ENCODE measurements at regions of chr19 and their contacts with region 1.

Region 1: DNA sequence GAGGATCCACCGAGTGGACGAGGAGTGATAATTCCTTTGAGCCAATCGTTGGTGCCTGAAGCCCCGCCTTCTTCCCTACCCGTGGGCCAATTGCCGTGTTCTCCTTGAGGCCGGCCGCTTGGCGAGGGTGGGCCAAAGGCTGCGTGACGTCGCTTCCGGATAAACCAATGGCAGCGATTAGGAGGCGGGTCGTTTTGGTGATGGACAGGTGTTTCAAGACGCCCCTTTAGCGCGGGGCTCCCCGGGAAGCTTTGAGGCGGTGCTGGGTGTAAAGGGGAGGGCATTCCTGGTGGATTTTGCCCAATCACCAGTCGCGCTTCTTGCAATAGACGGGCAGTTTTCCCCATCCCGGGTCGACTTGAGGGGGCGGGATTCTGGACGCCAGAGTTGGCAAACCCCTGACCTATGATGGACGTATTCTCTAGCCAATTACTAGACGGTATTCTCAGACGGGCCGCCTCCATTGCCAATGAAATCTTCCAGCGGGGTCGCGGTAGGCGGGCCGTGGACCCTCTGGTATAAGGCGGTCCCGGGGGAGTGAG is 310 bp upstream of the PRMT1 start:
- DNase-seq: peak; percentile 100
- H3K4me3 ChIP-seq: peak overlapping the region; percentile 63
- H3K27ac ChIP-seq: peak overlapping the region; percentile 90 to 93
- H3K4me1 ChIP-seq: peaks cover 6% of the 10 kb centered on the region
- H3K27me3 ChIP-seq: no peaks in the 10 kb centered on the region
- CTCF ChIP-seq: no peak
- EP300 ChIP-seq: peak; percentile 21
- POLR2A ChIP-seq: no peak

Region 2: DNA sequence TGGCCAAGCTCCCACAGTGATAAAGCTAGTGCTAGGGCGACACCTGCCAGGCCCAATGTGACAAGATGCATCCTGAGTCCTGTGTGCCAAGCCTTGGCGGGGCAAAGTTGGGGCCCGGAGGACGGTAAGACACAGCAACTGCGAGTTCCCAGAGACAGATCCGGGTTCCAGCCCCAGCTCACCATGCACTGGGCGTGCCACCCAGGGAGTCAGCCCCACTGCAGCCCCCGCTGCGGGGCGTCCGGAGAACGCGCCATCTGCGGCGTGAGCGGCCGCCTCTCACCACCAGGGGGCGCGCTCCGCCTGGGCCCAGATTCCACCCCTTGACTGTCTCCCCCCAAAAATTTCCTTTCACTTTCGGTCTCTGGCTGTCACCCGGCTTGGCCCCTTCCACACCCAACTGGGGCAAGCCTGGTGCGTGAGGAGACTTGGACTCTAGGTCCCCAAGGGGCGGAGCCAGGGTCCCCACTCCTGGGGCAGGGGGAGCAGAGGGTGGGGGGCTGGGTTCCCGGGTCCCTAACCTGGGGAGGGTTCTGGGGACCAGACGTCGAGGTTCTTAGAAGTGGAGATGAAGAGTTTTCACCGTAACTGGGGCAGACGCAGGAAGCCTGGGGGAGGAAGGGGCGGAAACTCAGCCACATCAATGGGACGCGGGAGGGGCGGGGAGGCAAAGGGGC is 202.8 kb before region 1 on chr19 and contains the start of gene FLT3LG:
- intact Hi-C with region 1: loop called in 1 of 4 experiments (anchors 10 kb)
- DNase-seq: peak; percentile 77 to 89 (median 83)
- H3K4me3 ChIP-seq: peak within 1 kb of the TSS; percentile 76
- H3K27ac ChIP-seq: peak within 1 kb of the TSS in 1 of 2 donors; percentile 63
- H3K4me1 ChIP-seq: peaks cover 5% of the 10 kb centered on the region
- H3K27me3 ChIP-seq: no peaks in the 10 kb centered on the region
- CTCF ChIP-seq: peak; percentile 97 to 100 (median 97)
- EP300 ChIP-seq: no peak
- POLR2A ChIP-seq: no peak
- total RNA-seq, gene FLT3LG: 5.1 to 15.2 (median 12.2) TPM

Region 3: DNA sequence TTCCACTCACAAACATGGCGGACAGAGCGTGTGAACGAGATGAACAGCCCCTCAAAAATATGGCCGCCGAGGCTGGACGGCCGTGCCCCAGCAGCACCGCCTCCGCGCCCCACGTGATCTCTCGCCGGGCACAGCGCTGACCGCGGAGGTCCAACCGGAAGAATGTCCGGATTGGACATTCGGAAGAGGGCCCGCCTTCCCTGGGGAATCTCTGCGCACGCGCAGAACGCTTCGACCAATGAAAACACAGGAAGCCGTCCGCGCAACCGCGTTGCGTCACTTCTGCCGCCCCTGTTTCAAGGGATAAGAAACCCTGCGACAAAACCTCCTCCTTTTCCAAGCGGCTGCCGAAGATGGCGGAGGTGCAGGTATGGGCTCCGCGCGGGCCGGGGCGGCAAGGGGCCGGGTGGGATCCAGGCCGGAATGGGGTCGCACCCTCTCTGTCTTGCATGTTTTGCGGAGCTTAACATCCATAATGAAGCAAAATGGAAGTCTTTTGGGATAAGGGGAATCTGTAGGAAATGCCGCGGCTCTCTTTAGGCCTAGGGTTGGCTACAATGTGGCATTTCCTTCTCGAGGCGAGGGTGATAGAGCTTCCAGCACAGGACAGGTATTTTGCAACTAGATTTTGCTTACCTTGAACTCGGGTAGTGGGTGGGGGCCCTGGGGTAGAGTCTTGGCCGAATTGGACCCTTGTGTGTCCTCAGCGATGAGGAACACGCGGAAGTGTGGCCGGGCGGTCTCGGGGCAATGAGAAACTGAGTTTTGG is 189.3 kb before region 1 on chr19 and contains the start of gene RPL13A:
- intact Hi-C with region 1: loop called in 1 of 4 experiments (anchors 10 kb)
- DNase-seq: peak; percentile 100
- H3K4me3 ChIP-seq: peak within 1 kb of the TSS; percentile 65
- H3K27ac ChIP-seq: peak within 1 kb of the TSS; percentile 84
- H3K4me1 ChIP-seq: peaks cover 9% of the 10 kb centered on the region
- H3K27me3 ChIP-seq: no peaks in the 10 kb centered on the region
- CTCF ChIP-seq: peak in 2 of 3 donors; percentile 20 to 22
- EP300 ChIP-seq: peak; percentile 46
- POLR2A ChIP-seq: peak; percentile 98
- total RNA-seq, gene RPL13A: 4,998 to 9,736 (median 6,664) TPM

Region 4: GRCh38 chr19:49497047-49497788 is 179.5 kb before region 1 on chr19:
- intact Hi-C with region 1: loop called in 1 of 4 experiments (anchors 5 kb)
- DNase-seq: peak in 1 of 5 donors; percentile 61
- H3K4me3 ChIP-seq: peak overlapping the region; percentile 72
- H3K27ac ChIP-seq: peak overlapping the region; percentile 87 to 89
- H3K4me1 ChIP-seq: peaks cover 8% of the 10 kb centered on the region
- H3K27me3 ChIP-seq: no peaks in the 10 kb centered on the region
- CTCF ChIP-seq: no peak
- EP300 ChIP-seq: no peak
- POLR2A ChIP-seq: no peak

Region 5: GRCh38 chr19:49533551-49534488 is 142.9 kb before region 1 on chr19:
- intact Hi-C with region 1: no loop called
- DNase-seq: peak; percentile 72 to 90 (median 87)
- H3K4me3 ChIP-seq: peak overlapping the region; percentile 61
- H3K27ac ChIP-seq: peak overlapping the region; percentile 4 to 12
- H3K4me1 ChIP-seq: peaks cover 9% of the 10 kb centered on the region
- H3K27me3 ChIP-seq: no peaks in the 10 kb centered on the region
- CTCF ChIP-seq: no peak
- EP300 ChIP-seq: no peak
- POLR2A ChIP-seq: no peak

Region 6: GRCh38 chr19:49570138-49570856 is 106.5 kb before region 1 on chr19:
- intact Hi-C with region 1: loop called in 1 of 4 experiments (anchors 5 kb)
- DNase-seq: peak; percentile 51 to 72 (median 62)
- H3K4me3 ChIP-seq: no peak overlapping the region
- H3K27ac ChIP-seq: peak overlapping the region in 1 of 2 donors; percentile 19
- H3K4me1 ChIP-seq: peaks cover 9% of the 10 kb centered on the region
- H3K27me3 ChIP-seq: no peaks in the 10 kb centered on the region
- CTCF ChIP-seq: peak; percentile 90 to 94 (median 93)
- EP300 ChIP-seq: no peak
- POLR2A ChIP-seq: no peak

Region 7: GRCh38 chr19:49590071-49590970 is 86.4 kb before region 1 on chr19:
- intact Hi-C with region 1: loop called in 1 of 4 experiments (anchors 10 kb)
- DNase-seq: peak; percentile 90 to 93 (median 91)
- H3K4me3 ChIP-seq: peak overlapping the region; percentile 74
- H3K27ac ChIP-seq: peak overlapping the region; percentile 20 to 75
- H3K4me1 ChIP-seq: peaks cover 3% of the 10 kb centered on the region
- H3K27me3 ChIP-seq: no peaks in the 10 kb centered on the region
- CTCF ChIP-seq: peak in 1 of 3 donors; percentile 9
- EP300 ChIP-seq: no peak
- POLR2A ChIP-seq: no peak

Region 8: GRCh38 chr19:49640113-49640898 is 36.5 kb before region 1 on chr19 and contains the start of gene RRAS:
- intact Hi-C with region 1: loop called in 1 of 4 experiments (anchors 5 kb)
- DNase-seq: peak; percentile 98 to 100 (median 99)
- H3K4me3 ChIP-seq: peak within 1 kb of the TSS; percentile 80
- H3K27ac ChIP-seq: peak within 1 kb of the TSS; percentile 98 to 100
- H3K4me1 ChIP-seq: peaks cover 12% of the 10 kb centered on the region
- H3K27me3 ChIP-seq: no peaks in the 10 kb centered on the region
- CTCF ChIP-seq: no peak
- EP300 ChIP-seq: peak; percentile 81
- POLR2A ChIP-seq: peak; percentile 97
- total RNA-seq, gene RRAS: 28.7 to 62.8 (median 37.6) TPM

Region 9: GRCh38 chr19:49817964-49818648 is 141.3 kb after region 1 on chr19 and contains the start of gene MED25:
- intact Hi-C with region 1: no loop called
- DNase-seq: peak; percentile 88 to 94 (median 91)
- H3K4me3 ChIP-seq: peak within 1 kb of the TSS; percentile 80
- H3K27ac ChIP-seq: peak within 1 kb of the TSS; percentile 96 to 97
- H3K4me1 ChIP-seq: peaks cover 11% of the 10 kb centered on the region
- H3K27me3 ChIP-seq: no peaks in the 10 kb centered on the region
- CTCF ChIP-seq: peak in 2 of 3 donors; percentile 61 to 79
- EP300 ChIP-seq: no peak
- POLR2A ChIP-seq: peak; percentile 86
- total RNA-seq, gene MED25: 30.3 to 89.9 (median 85.3) TPM